Naive thymus-derived CD4-positive, alpha-beta T cell (primary cell): ENCODE measurements at regions of chr11 and their contacts with region 1.

Region 1: DNA sequence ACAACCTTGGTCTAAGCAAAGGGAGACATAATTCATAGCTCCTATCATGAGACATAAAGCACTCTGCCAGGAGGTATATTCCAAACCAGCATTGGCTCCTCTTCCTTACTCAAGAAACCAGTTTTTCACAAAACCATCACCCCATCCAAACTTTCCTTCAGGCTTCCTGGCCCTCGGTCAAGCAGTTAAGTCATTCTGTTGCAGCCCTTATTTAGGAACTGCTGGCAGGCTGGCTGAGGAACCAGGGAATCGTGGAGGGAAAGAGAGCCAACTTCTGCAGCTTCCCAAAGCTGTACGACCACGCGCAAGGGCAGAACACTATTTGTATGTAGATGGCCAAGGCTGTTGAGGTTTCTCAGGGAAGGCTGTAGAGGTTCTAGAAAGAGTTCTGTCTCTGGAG is 680 bp downstream of the IFT46 start:
- DNase-seq: no peak
- ATAC-seq: no peak
- H3K4me3 ChIP-seq: no peak overlapping the region
- H3K4me3 Mint-ChIP-seq: peak overlapping the region; percentile 26 to 96 (median 80)
- H3K27ac ChIP-seq: peak overlapping the region; percentile 48
- H3K27ac Mint-ChIP-seq: peak overlapping the region; percentile 54 to 97 (median 88)
- H3K4me1 ChIP-seq: no peaks in the 10 kb centered on the region
- H3K4me1 Mint-ChIP-seq: peaks cover 9 to 29% (median 20%) of the 10 kb centered on the region in 7 donors
- H3K27me3 ChIP-seq: no peaks in the 10 kb centered on the region
- H3K27me3 Mint-ChIP-seq: no peaks in the 10 kb centered on the region

Region 2: DNA sequence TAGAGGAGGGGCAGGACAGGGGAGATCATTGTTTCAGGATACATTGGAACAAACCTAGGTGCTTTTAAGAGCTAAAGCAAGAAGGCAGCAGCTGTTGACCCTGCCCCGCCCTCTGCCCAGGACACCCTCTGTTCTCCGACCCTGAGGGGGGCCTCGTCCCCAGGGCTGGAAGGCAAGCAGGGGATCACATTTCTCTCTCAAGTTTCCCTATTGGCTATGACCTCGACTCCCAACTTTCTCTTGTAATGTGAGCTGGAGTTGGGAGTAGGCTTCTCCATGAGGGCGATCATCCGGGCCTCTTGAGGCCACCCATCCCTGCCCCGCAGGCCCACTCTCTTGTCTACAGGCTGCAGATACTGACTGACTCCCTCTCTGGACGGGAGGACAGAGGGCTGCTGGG is 805.7 kb before region 1 on chr11:
- CTCF ChIA-PET with region 1: no interaction called
- POLR2A ChIA-PET with region 1: no interaction called
- intact Hi-C with region 1: no loop called
- DNase-seq: no peak
- ATAC-seq: no peak
- H3K4me3 ChIP-seq: no peak overlapping the region
- H3K4me3 Mint-ChIP-seq: no peak overlapping the region
- H3K27ac ChIP-seq: no peak overlapping the region
- H3K27ac Mint-ChIP-seq: no peak overlapping the region
- H3K4me1 ChIP-seq: no peaks in the 10 kb centered on the region
- H3K4me1 Mint-ChIP-seq: no peaks in the 10 kb centered on the region
- H3K27me3 ChIP-seq: no peaks in the 10 kb centered on the region
- H3K27me3 Mint-ChIP-seq: peaks cover 0 to 14% (median 0%) of the 10 kb centered on the region in 5 donors

Region 3: DNA sequence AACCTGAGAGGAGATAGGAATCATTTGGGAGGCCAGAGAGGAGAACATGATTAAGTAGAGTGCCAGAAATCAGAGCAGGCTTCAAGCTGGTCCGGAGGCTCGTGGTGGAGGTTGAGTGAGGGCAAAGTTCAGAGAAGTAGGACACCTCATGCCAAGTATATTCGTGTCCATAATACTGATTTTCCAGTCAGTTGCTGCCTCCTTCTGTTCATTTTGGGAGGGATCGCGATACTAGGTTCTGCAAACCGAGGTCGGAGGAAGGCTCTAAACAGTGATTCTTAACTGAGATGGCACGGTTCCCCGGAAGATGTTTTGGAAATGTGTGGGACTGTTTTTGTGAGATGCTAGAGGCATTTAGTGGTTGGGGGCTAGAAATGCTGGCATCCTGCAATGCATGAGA is 274.1 kb before region 1 on chr11:
- CTCF ChIA-PET with region 1: no interaction called
- POLR2A ChIA-PET with region 1: no interaction called
- intact Hi-C with region 1: loop called in 1 of 2 experiments (anchors 10 kb)
- DNase-seq: peak in 8 of 9 donors; percentile 22 to 63 (median 46)
- ATAC-seq: peak; percentile 81
- H3K4me3 ChIP-seq: no peak overlapping the region
- H3K4me3 Mint-ChIP-seq: peak overlapping the region in 2 of 10 donors; percentile 30 to 33
- H3K27ac ChIP-seq: no peak overlapping the region
- H3K27ac Mint-ChIP-seq: peak overlapping the region in 1 of 9 donors; percentile 68
- H3K4me1 ChIP-seq: peaks cover 0 to 11% of the 10 kb centered on the region in 2 donors
- H3K4me1 Mint-ChIP-seq: peaks cover 13 to 19% (median 15%) of the 10 kb centered on the region in 7 donors
- H3K27me3 ChIP-seq: no peaks in the 10 kb centered on the region
- H3K27me3 Mint-ChIP-seq: no peaks in the 10 kb centered on the region

Region 4: DNA sequence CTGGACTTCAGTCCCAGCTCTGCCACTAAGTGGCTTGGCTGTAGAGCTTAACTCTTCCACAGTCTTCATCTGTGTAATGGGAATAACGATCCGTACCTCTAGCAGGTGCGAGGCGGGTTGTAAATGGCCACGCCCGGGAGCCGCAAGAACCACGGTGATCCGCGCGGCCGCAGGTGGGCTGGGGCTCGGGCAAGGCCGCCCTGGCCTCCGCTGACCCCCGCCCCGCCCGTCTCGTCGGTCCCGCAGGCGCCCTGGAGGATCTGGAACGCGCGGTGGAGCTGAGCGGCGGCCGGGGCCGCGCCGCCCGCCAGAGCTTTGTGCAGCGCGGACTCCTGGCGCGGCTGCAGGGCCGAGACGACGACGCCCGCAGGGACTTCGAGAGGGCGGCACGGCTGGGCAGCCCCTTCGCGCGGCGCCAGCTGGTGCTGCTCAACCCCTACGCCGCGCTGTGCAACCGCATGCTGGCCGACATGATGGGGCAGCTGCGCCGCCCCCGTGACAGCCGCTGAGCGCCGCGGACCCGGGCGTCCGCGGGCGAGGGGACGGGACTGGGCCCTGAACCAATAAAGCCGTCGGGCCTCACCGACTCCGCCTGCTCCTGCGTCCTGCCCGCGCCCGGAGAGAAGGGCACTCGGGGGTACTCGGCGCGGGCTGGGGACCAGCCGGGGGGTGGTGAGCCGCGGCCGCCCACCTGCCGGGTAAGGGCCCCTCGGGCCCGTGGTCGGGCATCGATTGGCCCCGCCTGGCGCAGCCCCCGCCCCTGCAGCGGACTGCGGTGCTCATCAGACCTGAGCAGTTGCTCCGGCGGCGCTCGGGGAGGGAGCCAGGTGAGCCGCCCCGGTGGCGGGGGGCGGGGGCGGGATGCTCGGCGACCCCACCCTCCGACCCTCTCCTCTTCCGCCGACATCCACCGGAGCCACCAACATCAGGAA is 34.4 kb before region 1 on chr11 and contains the start of gene TMEM25:
- CTCF ChIA-PET with region 1: no interaction called
- POLR2A ChIA-PET with region 1: no interaction called
- intact Hi-C with region 1: loop called (anchors 1 kb)
- DNase-seq: peak; percentile 55 to 82 (median 73)
- ATAC-seq: peak; percentile 90
- H3K4me3 ChIP-seq: peak within 1 kb of the TSS; percentile 83
- H3K4me3 Mint-ChIP-seq: peak within 1 kb of the TSS; percentile 92 to 99 (median 94)
- H3K27ac ChIP-seq: peak within 1 kb of the TSS; percentile 83
- H3K27ac Mint-ChIP-seq: peak within 1 kb of the TSS; percentile 82 to 96 (median 91)
- H3K4me1 ChIP-seq: peaks cover 13 to 14% of the 10 kb centered on the region in 2 donors
- H3K4me1 Mint-ChIP-seq: peaks cover 24 to 51% (median 45%) of the 10 kb centered on the region in 7 donors
- H3K27me3 ChIP-seq: no peaks in the 10 kb centered on the region
- H3K27me3 Mint-ChIP-seq: peaks cover 0 to 3% (median 0%) of the 10 kb centered on the region in 5 donors
- total RNA-seq, gene TMEM25: 12.1 to 32.8 (median 27.6) TPM